ENCODE measurements at regions of chr11 and their contacts with region 1.

Region 1: GRCh38 chr11:66386171-66387069 is 14.9 kb upstream of the SLC29A2 start:
- DNase-seq: peak; percentile 89
- H3K4me3 Mint-ChIP-seq: peak overlapping the region; percentile 38
- H3K27ac Mint-ChIP-seq: peak overlapping the region; percentile 21
- H3K4me1 Mint-ChIP-seq: peaks cover 6% of the 10 kb centered on the region
- H3K27me3 Mint-ChIP-seq: peaks cover 16% of the 10 kb centered on the region
- CTCF ChIP-seq: peak; percentile 77

Region 2: GRCh38 chr11:66035653-66036333 is 350.6 kb before region 1 on chr11:
- CTCF ChIA-PET with region 1: no interaction called
- POLR2A ChIA-PET with region 1: no interaction called
- intact Hi-C with region 1: no loop called
- DNase-seq: no peak
- H3K4me3 Mint-ChIP-seq: no peak overlapping the region
- H3K27ac Mint-ChIP-seq: no peak overlapping the region
- H3K4me1 Mint-ChIP-seq: no peaks in the 10 kb centered on the region
- H3K27me3 Mint-ChIP-seq: peaks cover 17% of the 10 kb centered on the region
- CTCF ChIP-seq: no peak

Region 3: DNA sequence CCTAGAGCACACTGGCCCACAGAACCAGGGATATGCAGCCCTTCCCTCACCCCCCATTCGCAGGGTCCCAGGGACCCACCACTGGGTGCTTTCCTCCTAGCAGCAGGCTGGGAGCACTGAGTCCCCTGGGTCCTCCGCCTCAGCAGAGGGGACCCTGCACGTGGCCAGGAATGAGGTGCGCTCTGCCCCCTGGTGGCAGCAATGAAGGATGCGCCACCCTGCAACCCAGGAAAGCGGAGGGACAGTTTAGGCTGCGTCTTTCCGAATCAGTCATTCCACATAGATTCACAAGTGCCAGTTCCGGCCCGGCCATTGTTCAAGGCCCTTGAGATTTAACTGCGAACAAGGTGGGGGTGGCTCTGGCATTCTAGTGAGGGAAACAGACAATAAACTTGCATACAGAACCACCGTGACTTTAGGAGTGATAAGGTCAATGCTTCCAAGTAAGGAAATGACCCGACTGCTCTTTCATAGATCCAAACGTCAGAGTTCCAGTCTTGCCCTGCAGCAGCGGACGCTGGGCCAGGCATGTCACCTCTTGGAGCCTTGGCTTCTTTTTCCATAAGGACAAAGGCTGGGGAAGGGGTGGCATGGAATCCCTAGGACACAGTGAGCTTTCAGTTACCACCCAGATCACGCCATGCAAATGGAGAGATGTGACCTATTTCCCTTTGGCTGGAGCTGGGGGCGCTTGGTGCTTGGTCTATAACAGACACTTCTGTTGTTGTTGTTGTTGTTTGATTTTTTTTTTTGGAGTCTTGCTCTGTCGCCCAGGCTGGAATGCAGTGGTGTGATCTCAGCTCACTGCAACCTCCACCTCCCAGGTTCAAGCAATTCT is 57.9 kb before region 1 on chr11:
- CTCF ChIA-PET with region 1: interaction called, 5 read pairs
- POLR2A ChIA-PET with region 1: no interaction called
- intact Hi-C with region 1: loop called (anchors 1 kb)
- DNase-seq: peak; percentile 78
- H3K4me3 Mint-ChIP-seq: no peak overlapping the region
- H3K27ac Mint-ChIP-seq: peak overlapping the region; percentile 4
- H3K4me1 Mint-ChIP-seq: peaks cover 46% of the 10 kb centered on the region
- H3K27me3 Mint-ChIP-seq: no peaks in the 10 kb centered on the region
- CTCF ChIP-seq: peak; percentile 91

Region 4: GRCh38 chr11:66371627-66372415 is 14.6 kb before region 1 on chr11 and contains the start of gene SLC29A2:
- CTCF ChIA-PET with region 1: interaction called, 38 read pairs
- POLR2A ChIA-PET with region 1: interaction called, 7 read pairs
- intact Hi-C with region 1: no loop called
- DNase-seq: peak; percentile 81
- H3K4me3 Mint-ChIP-seq: peak within 1 kb of the TSS; percentile 76
- H3K27ac Mint-ChIP-seq: no peak within 1 kb of the TSS
- H3K4me1 Mint-ChIP-seq: peaks cover 8% of the 10 kb centered on the region
- H3K27me3 Mint-ChIP-seq: no peaks in the 10 kb centered on the region
- CTCF ChIP-seq: no peak
- total RNA-seq, gene SLC29A2: 3.6 and 7.0 TPM in 2 replicates

Measured in MCF 10A (cell line).